Esophagus muscularis mucosa (tissue), 4 donors: ENCODE measurements at regions of chr11 and their contacts with region 1.

Region 1: GRCh38 chr11:72222907-72223614 is 1.5 kb upstream of the INPPL1 start:
- DNase-seq: peak; percentile 98
- H3K4me3 ChIP-seq: peak overlapping the region; percentile 83 to 96 (median 90)
- H3K27ac ChIP-seq: peak overlapping the region; percentile 96 to 98 (median 97)
- H3K4me1 ChIP-seq: peaks cover 21 to 45% (median 43%) of the 10 kb centered on the region in 4 donors
- H3K27me3 ChIP-seq: peaks cover 0 to 3% (median 0%) of the 10 kb centered on the region in 4 donors
- CTCF ChIP-seq: peak; percentile 18 to 49 (median 43)
- EP300 ChIP-seq: no peak
- POLR2A ChIP-seq: peak; percentile 70

Region 2: GRCh38 chr11:71342951-71343827 is 879.9 kb before region 1 on chr11:
- intact Hi-C with region 1: no loop called
- DNase-seq: no peak
- H3K4me3 ChIP-seq: no peak overlapping the region
- H3K27ac ChIP-seq: no peak overlapping the region
- H3K4me1 ChIP-seq: peaks cover 0 to 12% (median 6%) of the 10 kb centered on the region in 4 donors
- H3K27me3 ChIP-seq: peaks cover 0 to 56% (median 0%) of the 10 kb centered on the region in 4 donors
- CTCF ChIP-seq: peak in 1 of 3 experiments; percentile 29
- EP300 ChIP-seq: no peak
- POLR2A ChIP-seq: no peak

Region 3: DNA sequence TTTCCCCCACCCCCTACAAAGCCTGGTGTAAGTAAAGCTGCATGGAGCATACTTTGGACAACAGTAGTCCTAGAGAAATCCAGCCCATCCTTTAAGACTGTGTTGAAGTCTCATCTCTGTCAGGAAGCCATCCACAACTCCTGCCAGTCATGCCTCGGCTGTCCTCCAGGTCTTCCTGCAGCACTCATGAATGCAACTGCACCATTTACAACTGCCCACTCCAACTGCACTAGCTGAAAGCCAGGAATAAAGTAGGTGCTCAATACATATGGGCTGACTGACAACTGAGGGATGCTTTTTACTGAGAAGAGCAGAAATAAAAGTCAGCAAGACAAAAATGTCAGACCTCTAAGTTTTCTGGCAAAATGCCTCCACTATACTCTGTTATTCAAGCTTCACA is 197.0 kb before region 1 on chr11:
- intact Hi-C with region 1: loop called (anchors 10 kb)
- DNase-seq: no peak
- H3K4me3 ChIP-seq: no peak overlapping the region
- H3K27ac ChIP-seq: peak overlapping the region; percentile 66 to 79 (median 71)
- H3K4me1 ChIP-seq: peaks cover 46 to 76% (median 71%) of the 10 kb centered on the region in 4 donors
- H3K27me3 ChIP-seq: no peaks in the 10 kb centered on the region
- CTCF ChIP-seq: no peak
- EP300 ChIP-seq: no peak
- POLR2A ChIP-seq: no peak

Region 4: DNA sequence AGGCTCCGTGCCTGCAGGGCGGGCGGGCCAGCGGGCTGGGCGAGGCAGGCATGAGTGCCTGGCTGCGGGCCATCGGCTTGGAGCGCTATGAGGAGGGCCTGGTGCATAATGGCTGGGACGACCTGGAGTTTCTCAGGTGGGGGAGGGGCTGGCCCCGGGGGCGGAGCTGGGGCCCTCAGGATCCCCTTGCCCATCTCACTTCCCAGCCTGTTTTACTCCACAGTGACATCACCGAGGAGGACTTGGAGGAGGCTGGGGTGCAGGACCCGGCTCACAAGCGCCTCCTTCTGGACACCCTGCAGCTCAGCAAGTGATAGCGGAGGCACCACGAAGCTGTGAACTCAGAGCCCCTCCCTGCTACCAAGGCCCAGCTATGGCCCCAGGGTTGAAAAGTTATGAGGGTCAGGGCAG is 15.0 kb after region 1 on chr11:
- intact Hi-C with region 1: loop called (anchors 1 kb)
- DNase-seq: no peak
- H3K4me3 ChIP-seq: no peak overlapping the region
- H3K27ac ChIP-seq: peak overlapping the region; percentile 76 to 86 (median 78)
- H3K4me1 ChIP-seq: peaks cover 42 to 82% (median 68%) of the 10 kb centered on the region in 4 donors
- H3K27me3 ChIP-seq: peaks cover 2 to 26% (median 9%) of the 10 kb centered on the region in 4 donors
- CTCF ChIP-seq: peak; percentile 71 to 91 (median 80)
- EP300 ChIP-seq: no peak
- POLR2A ChIP-seq: no peak

Region 5: DNA sequence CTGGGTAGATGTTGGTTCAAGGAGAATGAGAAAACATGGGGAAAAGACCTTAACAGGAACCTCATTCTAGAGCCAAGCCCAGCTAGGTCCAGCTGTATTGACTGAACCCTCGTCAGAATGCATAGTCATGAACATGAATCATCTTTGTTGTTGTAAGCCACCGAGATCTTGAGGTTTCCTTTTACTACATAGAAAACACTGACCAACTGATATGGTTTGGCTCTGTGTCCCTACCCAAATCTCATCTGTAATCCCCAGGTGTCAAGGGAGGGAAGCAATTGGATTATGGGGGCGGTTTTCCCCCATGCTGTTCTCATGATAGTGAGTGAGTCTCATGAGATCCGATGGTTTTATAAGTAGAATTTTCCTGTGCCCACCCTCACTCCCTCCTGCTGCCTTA is 40.3 kb after region 1 on chr11:
- intact Hi-C with region 1: no loop called
- DNase-seq: no peak
- H3K4me3 ChIP-seq: no peak overlapping the region
- H3K27ac ChIP-seq: no peak overlapping the region
- H3K4me1 ChIP-seq: no peaks in the 10 kb centered on the region
- H3K27me3 ChIP-seq: no peaks in the 10 kb centered on the region
- CTCF ChIP-seq: no peak
- EP300 ChIP-seq: no peak
- POLR2A ChIP-seq: no peak

Region 6: GRCh38 chr11:72430741-72431570 is 207.9 kb after region 1 on chr11:
- intact Hi-C with region 1: loop called (anchors 5 kb)
- DNase-seq: no peak
- H3K4me3 ChIP-seq: no peak overlapping the region
- H3K27ac ChIP-seq: no peak overlapping the region
- H3K4me1 ChIP-seq: peaks cover 12 to 52% (median 33%) of the 10 kb centered on the region in 4 donors
- H3K27me3 ChIP-seq: no peaks in the 10 kb centered on the region
- CTCF ChIP-seq: peak; percentile 57 to 75 (median 58)
- EP300 ChIP-seq: no peak
- POLR2A ChIP-seq: no peak